ENCODE measurements at regions of chr20 and their contacts with region 1.

Region 1: GRCh38 chr20:1856424-1856823 is 38.8 kb upstream of the SIRPA start:
- DNase-seq: no peak
- H3K4me3 ChIP-seq: no peak overlapping the region
- H3K4me3 Mint-ChIP-seq: no peak overlapping the region
- H3K27ac Mint-ChIP-seq: peak overlapping the region; percentile 74
- H3K4me1 ChIP-seq: peaks cover 53% of the 10 kb centered on the region
- H3K4me1 Mint-ChIP-seq: peaks cover 36% of the 10 kb centered on the region
- H3K27me3 ChIP-seq: no peaks in the 10 kb centered on the region
- H3K27me3 Mint-ChIP-seq: no peaks in the 10 kb centered on the region
- CTCF ChIP-seq: no peak

Region 2: DNA sequence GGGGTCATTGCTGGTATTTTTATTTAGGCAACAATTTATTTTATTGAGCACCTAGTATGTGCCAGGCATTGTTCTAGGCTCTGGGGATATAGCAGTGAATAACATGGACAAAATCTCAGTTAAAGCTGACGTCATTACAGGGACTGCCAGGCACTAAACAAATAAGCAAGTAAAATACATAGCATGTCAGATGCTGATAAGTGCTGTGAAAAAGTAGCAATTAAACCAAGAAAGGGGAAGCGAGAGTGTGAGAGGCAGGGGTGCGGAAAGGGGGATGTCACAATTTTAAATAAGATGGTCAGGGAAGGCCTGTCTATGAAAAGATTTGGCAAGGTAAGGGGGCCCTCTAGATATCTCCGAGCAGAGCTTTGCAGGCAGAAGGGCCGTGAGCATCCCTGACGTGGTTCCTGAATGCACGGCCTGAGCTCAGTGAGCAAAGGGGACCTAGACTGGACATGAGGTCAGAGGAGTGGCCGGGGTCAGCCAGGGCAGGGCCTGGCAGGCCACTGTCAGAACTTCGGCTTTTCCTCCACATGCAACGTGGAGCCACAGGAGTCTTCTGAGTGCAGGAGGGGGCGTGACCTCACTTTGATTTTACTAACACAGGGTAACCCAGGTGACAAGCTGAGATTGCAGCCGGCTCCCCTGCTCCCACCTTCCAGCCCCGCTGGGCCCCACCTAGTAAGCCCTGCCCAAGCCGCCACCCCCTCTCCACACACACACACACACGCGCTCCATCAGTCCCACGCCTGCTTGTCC is 14.5 kb after region 1 on chr20:
- CTCF ChIA-PET with region 1: interaction called, 4 read pairs
- POLR2A ChIA-PET with region 1: no interaction called
- intact Hi-C with region 1: loop called (anchors 1 kb)
- DNase-seq: peak in 1 of 2 experiments; percentile 32
- H3K4me3 ChIP-seq: no peak overlapping the region
- H3K4me3 Mint-ChIP-seq: no peak overlapping the region
- H3K27ac Mint-ChIP-seq: no peak overlapping the region
- H3K4me1 ChIP-seq: peaks cover 50% of the 10 kb centered on the region
- H3K4me1 Mint-ChIP-seq: peaks cover 34% of the 10 kb centered on the region
- H3K27me3 ChIP-seq: no peaks in the 10 kb centered on the region
- H3K27me3 Mint-ChIP-seq: no peaks in the 10 kb centered on the region
- CTCF ChIP-seq: no peak

Region 3: DNA sequence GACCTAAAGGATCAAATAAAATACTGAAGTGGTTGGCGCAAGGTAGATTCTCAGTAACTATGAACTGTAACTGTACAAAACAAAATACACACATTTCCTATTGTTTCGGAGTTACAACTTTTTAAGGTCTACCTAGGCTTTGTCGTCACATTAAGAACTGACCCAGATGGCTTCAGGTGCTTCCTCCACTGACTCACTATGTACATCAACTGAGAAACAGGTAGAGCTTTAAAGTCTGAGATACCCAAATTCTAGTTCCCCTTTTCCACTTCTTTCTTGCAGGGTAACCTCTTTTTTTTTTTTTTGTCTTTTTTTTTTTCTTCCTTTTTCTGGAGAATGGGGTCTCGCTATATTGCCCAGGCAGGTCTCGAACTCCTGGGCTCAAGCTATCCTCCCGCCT is 608.7 kb after region 1 on chr20:
- CTCF ChIA-PET with region 1: no interaction called
- POLR2A ChIA-PET with region 1: interaction called, 11 read pairs
- intact Hi-C with region 1: no loop called
- DNase-seq: no peak
- H3K4me3 ChIP-seq: no peak overlapping the region
- H3K4me3 Mint-ChIP-seq: no peak overlapping the region
- H3K27ac Mint-ChIP-seq: no peak overlapping the region
- H3K4me1 ChIP-seq: peaks cover 16% of the 10 kb centered on the region
- H3K4me1 Mint-ChIP-seq: peaks cover 14% of the 10 kb centered on the region
- H3K27me3 ChIP-seq: no peaks in the 10 kb centered on the region
- H3K27me3 Mint-ChIP-seq: no peaks in the 10 kb centered on the region
- CTCF ChIP-seq: no peak

Measured in Caco-2 (cell line).